Activated CD4-positive, alpha-beta T cell treated with anti-CD3 and anti-CD28 coated beads for 36 hours (primary cell): ENCODE measurements at regions of chr9 and their contacts with region 1.

Region 1: DNA sequence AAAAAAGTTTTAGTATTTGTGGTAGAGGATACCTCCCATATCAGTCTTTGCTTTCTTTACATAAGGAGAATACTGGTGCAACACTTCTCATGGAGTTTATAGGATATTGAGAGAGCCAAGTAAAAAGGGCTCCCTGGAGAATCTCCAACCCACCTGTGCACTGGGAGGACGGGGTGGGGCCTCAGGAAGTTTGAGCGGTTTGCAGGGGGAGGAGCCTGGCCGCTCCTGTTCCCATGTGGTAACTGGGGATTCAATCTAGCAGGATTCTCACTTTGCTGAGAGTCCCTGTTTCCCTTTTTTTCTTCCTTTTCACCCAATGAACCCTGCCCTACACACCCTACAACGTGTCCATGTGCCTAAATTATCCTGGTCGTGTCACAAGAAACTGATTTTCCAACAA is 82.8 kb downstream of the APTX start:
- DNase-seq: no peak
- ATAC-seq: no peak
- H3K4me3 Mint-ChIP-seq: no peak overlapping the region
- H3K27ac Mint-ChIP-seq: no peak overlapping the region
- H3K4me1 Mint-ChIP-seq: no peaks in the 10 kb centered on the region
- H3K27me3 Mint-ChIP-seq: peaks cover 3% of the 10 kb centered on the region

Region 2: DNA sequence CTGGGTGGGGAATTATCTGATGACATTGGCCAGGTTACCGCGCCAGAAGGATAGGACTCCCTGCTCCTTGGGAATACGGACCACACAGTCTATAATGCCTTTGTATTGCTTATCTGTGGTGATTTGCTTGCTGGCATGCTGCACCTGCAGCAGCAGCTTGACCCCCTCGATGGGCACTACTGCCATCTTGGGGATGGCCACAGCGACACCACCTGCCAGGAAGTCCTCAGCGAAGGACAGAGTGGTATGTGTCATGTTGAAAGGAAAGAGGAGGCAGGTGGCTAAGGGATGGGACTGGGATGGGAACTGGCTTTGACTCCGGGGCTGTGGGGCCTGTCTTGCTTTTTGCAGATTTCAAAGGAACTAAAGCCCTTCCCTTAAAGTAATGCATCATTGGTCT is 584.5 kb before region 1 on chr9:
- CTCF ChIA-PET with region 1: no interaction called
- POLR2A ChIA-PET with region 1: no interaction called
- intact Hi-C with region 1: no loop called
- DNase-seq: no peak
- ATAC-seq: no peak
- H3K4me3 Mint-ChIP-seq: no peak overlapping the region
- H3K27ac Mint-ChIP-seq: no peak overlapping the region
- H3K4me1 Mint-ChIP-seq: no peaks in the 10 kb centered on the region
- H3K27me3 Mint-ChIP-seq: peaks cover 15% of the 10 kb centered on the region

Region 3: DNA sequence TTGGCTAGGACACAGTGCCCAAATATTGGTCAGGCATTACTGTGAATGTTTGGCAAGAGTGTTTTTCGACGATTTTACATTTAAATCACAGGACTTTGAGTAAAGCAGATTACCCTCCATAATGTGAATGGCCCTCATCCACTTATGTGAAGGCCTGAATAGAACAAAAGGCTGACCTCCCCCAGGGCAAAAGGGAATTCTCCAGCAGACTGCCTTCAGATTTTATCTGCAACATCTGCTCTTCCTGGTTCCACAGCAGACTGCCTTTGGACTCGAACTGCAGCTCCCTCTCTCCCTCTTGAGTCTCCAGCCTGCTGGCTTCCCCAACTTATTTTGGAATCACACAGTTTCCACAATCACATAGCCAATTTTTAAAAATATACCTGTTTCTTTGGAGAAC is 142.4 kb before region 1 on chr9:
- CTCF ChIA-PET with region 1: no interaction called
- POLR2A ChIA-PET with region 1: no interaction called
- intact Hi-C with region 1: loop called in 1 of 2 experiments (anchors 10 kb)
- DNase-seq: no peak
- ATAC-seq: no peak
- H3K4me3 Mint-ChIP-seq: no peak overlapping the region
- H3K27ac Mint-ChIP-seq: no peak overlapping the region
- H3K4me1 Mint-ChIP-seq: no peaks in the 10 kb centered on the region
- H3K27me3 Mint-ChIP-seq: peaks cover 20% of the 10 kb centered on the region